ENCODE measurements at regions of chr17 and their contacts with region 1.

Region 1: GRCh38 chr17:82320956-82321927 is 3.8 kb upstream of the CD7 start:
- DNase-seq: peak in 1 of 4 donors; percentile 93
- ATAC-seq: peak; percentile 76
- H3K4me3 ChIP-seq: no peak overlapping the region
- H3K27ac ChIP-seq: no peak overlapping the region
- H3K4me1 ChIP-seq: peaks cover 0 to 15% of the 10 kb centered on the region in 2 donors
- H3K27me3 ChIP-seq: peaks cover under 1 to 41% of the 10 kb centered on the region in 2 donors
- CTCF ChIP-seq: peak; percentile 83 to 88

Region 2: DNA sequence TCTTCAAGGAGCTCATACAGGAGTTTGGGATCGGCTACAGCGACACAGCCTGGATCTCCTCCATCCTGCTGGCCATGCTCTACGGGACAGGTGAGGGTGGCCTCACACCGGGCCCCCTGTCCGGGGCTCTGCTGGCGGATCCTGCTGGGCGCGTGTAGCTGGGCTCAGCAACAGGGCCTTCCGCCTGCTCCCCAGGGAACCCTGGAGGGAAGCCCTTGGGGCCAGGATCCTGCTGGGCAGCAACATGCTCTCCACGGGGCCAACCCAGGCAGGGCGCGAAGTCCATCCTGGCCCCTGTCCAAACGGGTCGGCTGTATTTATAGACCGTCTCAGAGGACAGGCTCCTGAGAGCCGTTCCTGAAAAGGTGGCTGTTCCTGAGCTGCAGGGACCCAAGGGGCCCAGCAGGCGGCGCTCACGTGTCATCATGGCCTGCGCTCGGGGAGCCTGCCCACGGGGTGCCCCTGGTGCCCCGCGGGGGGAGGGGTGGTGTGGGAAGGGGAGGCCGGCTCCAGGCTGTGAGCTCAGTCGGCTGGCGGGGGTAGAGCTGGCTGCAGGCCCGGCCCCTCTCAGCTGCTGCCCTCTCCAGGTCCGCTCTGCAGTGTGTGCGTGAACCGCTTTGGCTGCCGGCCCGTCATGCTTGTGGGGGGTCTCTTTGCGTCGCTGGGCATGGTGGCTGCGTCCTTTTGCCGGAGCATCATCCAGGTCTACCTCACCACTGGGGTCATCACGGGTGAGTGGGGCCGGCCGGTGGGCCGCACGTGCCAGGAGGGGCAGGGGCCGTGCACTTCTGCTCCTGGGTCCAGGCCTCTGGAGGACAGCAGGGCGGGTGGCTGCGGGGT is 84.9 kb before region 1 on chr17:
- intact Hi-C with region 1: loop called in 1 of 2 experiments (anchors 5 kb)
- DNase-seq: peak in 3 of 4 donors; percentile 53 to 89 (median 83)
- ATAC-seq: peak; percentile 46
- H3K4me3 ChIP-seq: no peak overlapping the region
- H3K27ac ChIP-seq: peak overlapping the region in 1 of 2 donors; percentile 55
- H3K4me1 ChIP-seq: peaks cover 52 to 100% of the 10 kb centered on the region in 2 donors
- H3K27me3 ChIP-seq: no peaks in the 10 kb centered on the region
- CTCF ChIP-seq: peak; percentile 84 to 92

Region 3: GRCh38 chr17:82400830-82401229 is 79.6 kb after region 1 on chr17:
- intact Hi-C with region 1: no loop called
- DNase-seq: peak in 2 of 4 donors; percentile 79 to 94
- ATAC-seq: peak; percentile 75
- H3K4me3 ChIP-seq: peak overlapping the region in 1 of 2 donors; percentile 11
- H3K27ac ChIP-seq: peak overlapping the region in 1 of 2 donors; percentile 64
- H3K4me1 ChIP-seq: peaks cover 8 to 27% of the 10 kb centered on the region in 2 donors
- H3K27me3 ChIP-seq: no peaks in the 10 kb centered on the region
- CTCF ChIP-seq: no peak